ENCODE measurements at regions of chr14 and their contacts with region 1.

Region 1: DNA sequence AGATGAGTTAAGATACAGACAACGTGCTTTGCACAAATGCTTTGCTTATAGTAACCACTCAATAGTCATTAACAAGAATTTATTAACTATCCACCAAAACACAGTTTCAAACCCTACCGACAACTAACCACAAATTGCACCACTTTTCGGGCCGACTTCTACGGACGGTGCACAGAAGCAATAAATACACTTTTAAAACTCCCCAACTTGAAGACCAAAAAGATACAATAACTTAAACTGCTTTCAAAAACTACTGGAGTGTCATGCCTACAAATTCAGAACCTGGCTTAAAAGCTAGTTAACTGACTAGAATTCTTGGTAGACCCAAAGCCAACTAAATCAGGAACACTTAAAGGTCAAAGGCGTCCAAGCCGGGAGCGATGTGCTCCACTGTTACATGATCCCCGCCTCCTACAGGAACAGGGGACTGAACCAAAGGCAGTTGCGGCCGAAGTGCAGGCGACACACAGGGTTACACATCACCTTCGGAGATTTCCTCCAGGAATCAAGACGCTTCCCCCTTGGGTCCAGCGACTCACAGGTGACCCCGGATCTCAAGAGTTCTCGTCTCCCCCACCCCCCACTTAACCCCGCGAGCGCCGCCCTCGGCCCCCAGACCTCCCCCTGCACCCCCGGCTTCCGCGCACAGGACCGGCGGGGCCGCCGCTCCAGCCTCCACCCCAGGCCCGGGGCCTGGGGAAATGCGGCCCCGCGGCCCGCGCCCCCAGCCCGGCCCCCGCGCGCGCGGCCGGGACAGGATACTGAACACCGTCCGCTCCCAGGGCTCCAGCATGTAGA is 507 bp downstream of the SPTSSA start:
- DNase-seq: peak; percentile 46
- H3K4me3 Mint-ChIP-seq: peak overlapping the region; percentile 91
- H3K27ac Mint-ChIP-seq: peak overlapping the region; percentile 76
- H3K4me1 Mint-ChIP-seq: peaks cover 14% of the 10 kb centered on the region
- H3K27me3 Mint-ChIP-seq: no peaks in the 10 kb centered on the region

Region 2: DNA sequence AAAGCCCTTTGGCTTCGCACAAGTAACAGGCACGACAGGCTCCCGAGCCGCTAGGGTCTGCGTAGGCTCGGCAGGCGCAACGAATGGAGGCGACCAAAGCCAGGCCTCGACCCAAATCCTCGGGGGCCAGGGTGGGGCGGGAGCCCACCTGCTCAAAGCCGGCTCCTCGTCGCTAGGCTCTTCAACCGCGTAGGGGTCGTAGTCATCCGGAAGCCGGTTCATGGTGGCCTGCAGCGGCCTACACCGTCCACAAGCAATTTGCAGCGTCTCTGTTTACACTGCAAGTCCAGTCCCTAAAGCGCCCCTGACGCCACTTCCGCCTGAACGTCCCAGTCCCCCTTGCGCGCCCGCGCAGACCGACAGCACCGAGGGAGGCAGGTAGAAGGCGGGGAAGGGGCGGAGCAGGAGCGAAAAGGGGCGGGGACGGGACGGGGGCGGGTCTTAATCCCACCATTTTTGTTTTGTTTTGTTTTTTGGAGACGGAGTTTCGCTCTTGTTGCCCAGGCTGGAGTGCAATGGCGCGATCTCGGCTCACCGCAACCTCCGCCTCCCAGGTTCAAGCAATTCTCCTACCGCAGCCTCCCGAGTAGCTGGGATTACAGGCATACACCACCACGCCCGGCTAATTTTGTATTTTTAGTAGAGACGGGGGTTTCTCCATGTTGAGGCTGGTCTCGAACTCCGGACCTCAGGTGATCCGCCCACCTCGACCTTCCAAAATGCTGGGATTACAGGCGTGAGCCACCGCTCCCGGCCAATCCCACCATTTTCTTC is 78.1 kb after region 1 on chr14 and contains the start of gene EAPP:
- CTCF ChIA-PET with region 1: no interaction called
- POLR2A ChIA-PET with region 1: no interaction called
- intact Hi-C with region 1: loop called (anchors 5 kb)
- DNase-seq: peak; percentile 98
- H3K4me3 Mint-ChIP-seq: peak within 1 kb of the TSS; percentile 99
- H3K27ac Mint-ChIP-seq: peak within 1 kb of the TSS; percentile 98
- H3K4me1 Mint-ChIP-seq: peaks cover 31% of the 10 kb centered on the region
- H3K27me3 Mint-ChIP-seq: no peaks in the 10 kb centered on the region
- total RNA-seq, gene EAPP: 37.5 to 40.2 TPM

Region 3: GRCh38 chr14:34629657-34630529 is 168.4 kb after region 1 on chr14 and contains the start of gene SNX6:
- CTCF ChIA-PET with region 1: no interaction called
- POLR2A ChIA-PET with region 1: no interaction called
- intact Hi-C with region 1: loop called (anchors 5 kb)
- DNase-seq: peak; percentile 89
- H3K4me3 Mint-ChIP-seq: peak within 1 kb of the TSS; percentile 90
- H3K27ac Mint-ChIP-seq: peak within 1 kb of the TSS; percentile 87
- H3K4me1 Mint-ChIP-seq: peaks cover 29% of the 10 kb centered on the region
- H3K27me3 Mint-ChIP-seq: peaks cover 2% of the 10 kb centered on the region
- total RNA-seq, gene SNX6: 82.0 to 86.9 TPM